IMR-90 (cell line): ENCODE measurements at regions of chr4 and their contacts with region 1.

Region 1: DNA sequence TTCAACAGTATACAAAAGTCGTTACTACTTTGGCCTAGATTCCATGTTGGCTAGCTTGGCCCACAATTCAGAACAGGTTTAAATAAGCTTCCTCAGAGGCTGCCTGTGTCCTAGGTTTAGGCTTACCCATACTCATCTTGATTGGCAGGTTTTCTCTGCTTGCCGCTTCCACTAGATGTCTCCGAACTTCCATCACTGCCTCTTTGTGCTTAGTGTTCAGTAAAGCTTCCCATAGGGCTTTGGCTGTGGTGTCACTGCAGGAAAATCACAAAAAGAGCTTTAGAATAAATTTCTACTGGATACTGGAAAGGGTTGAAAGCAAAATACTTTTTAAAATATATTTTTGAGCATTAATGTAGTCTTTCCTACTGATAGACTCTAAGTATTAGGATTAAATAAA is 52.4 kb downstream of the SCFD2 start:
- DNase-seq: peak; percentile 44
- ATAC-seq: peak; percentile 44; the same call in 1 of the 2 replicates
- H3K4me3 ChIP-seq: no peak overlapping the region
- H3K27ac ChIP-seq: no peak overlapping the region
- H3K4me1 ChIP-seq: peaks cover 2% of the 10 kb centered on the region; the same call in 1 of the 2 replicates
- H3K27me3 ChIP-seq: no peaks in the 10 kb centered on the region
- CTCF ChIP-seq: peak; percentile 36
- POLR2A ChIP-seq: no peak
- RAD21 ChIP-seq: peak; percentile 42; the same call in 1 of the 2 replicates

Region 2: DNA sequence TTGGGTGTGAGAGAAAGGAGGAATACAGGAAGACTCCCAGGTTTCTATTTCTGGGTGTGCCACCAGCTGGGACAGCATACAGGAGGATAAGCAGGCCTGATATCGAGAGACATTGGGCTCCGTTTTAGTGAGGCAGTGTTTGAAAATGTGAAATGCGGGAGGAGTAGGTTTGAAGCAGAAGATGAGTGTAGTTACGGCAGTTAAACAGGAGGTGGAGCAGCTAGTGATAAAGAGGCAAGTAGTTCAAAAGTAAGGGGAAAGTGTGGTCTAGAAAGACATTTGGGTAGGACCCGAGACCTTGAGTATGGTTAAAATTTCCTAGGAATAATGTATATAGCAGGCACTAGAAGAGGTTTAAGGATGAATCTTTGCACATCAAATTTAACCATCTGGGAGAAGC is 1428.1 kb before region 1 on chr4:
- CTCF ChIA-PET with region 1: no interaction called
- POLR2A ChIA-PET with region 1: no interaction called
- dilution Hi-C with region 1: no loop called
- in situ Hi-C with region 1: no loop called
- intact Hi-C with region 1: loop called (anchors 10 kb)
- DNase-seq: peak; percentile 28
- ATAC-seq: peak; percentile 69
- H3K4me3 ChIP-seq: no peak overlapping the region
- H3K27ac ChIP-seq: no peak overlapping the region
- H3K4me1 ChIP-seq: no peaks in the 10 kb centered on the region
- H3K27me3 ChIP-seq: no peaks in the 10 kb centered on the region
- CTCF ChIP-seq: peak; percentile 31; the same call in 1 of the 2 replicates
- POLR2A ChIP-seq: no peak
- RAD21 ChIP-seq: peak; percentile 26; the same call in 1 of the 2 replicates

Region 3: GRCh38 chr4:53221832-53222480 is 91.6 kb before region 1 on chr4:
- CTCF ChIA-PET with region 1: no interaction called
- POLR2A ChIA-PET with region 1: no interaction called
- dilution Hi-C with region 1: no loop called
- in situ Hi-C with region 1: no loop called
- intact Hi-C with region 1: no loop called
- DNase-seq: no peak
- ATAC-seq: no peak
- H3K4me3 ChIP-seq: no peak overlapping the region
- H3K27ac ChIP-seq: no peak overlapping the region
- H3K4me1 ChIP-seq: no peaks in the 10 kb centered on the region
- H3K27me3 ChIP-seq: no peaks in the 10 kb centered on the region
- CTCF ChIP-seq: no peak
- POLR2A ChIP-seq: no peak
- RAD21 ChIP-seq: no peak